Astrocyte of the cerebellum (primary cell): ENCODE measurements at regions of chr15 and their contacts with region 1.

Region 1: DNA sequence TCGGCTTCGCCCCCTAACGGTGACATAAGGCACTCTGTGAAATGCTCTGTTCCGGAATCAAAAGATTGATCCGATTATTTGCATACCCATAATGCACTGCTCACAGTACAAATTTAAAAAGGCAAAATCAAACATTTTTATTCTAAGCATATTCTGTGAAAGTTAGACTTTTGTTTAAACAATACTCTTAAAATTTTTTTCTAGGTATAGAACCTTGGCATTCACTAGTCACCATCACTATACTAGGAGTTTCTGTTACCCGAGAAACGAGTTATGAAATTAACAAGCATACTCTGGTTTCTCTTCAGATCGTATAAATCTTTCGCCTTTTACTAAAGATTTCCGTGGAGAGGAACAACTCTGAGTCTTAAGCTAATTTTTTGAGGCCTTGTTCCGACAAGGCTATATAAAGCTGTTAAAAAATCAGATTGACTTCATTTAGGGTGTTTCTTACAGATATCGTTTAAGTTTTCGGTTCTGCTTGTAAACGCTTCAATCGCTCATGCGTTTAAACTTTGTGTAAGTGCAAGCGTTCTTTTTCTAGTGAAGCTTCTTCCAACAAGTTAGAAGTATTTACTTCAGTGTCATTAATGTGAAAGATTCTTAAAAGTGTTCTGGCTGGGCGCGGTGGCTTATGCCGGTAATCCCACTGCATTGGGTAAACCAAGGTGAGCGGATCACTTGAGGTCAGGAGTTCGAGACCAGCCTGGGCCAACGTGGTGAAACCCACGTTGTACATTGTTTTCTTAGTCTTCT is at the start of gene RNU5B-1:
- DNase-seq: peak; percentile 92
- H3K4me3 ChIP-seq: peak within 1 kb of the TSS; percentile 36
- CTCF ChIP-seq: peak; percentile 96

Region 2: GRCh38 chr15:65133548-65134200 is 170.9 kb before region 1 on chr15 and contains the start of gene PDCD7:
- in situ Hi-C with region 1: no loop called
- DNase-seq: peak; percentile 79
- H3K4me3 ChIP-seq: peak within 1 kb of the TSS; percentile 65
- CTCF ChIP-seq: no peak

Region 3: GRCh38 chr15:65460741-65461347 is 156.3 kb after region 1 on chr15:
- in situ Hi-C with region 1: loop called (anchors 25 kb)
- DNase-seq: no peak
- H3K4me3 ChIP-seq: no peak overlapping the region
- CTCF ChIP-seq: no peak